Activated T-helper 1 cell treated with anti-CD3 and anti-CD28 coated beads, Interleukin-12 subunit alpha, Interleukin-12 subunit beta, Interleukin-2, Interleukin-4 antibody, amounts not matched to agents 30 ng/mL and 10 ng/mL and 1 ng/mL, durations not matched to agents 14 hours and 24 hours and 36 hours (primary cell): ENCODE measurements at regions of chr12 and their contacts with region 1.

Region 1: GRCh38 chr12:12582895-12583303 is 20.2 kb upstream of the DUSP16 start:
- DNase-seq: peak; percentile 30
- H3K4me3 Mint-ChIP-seq: peak overlapping the region; percentile 21
- H3K27ac Mint-ChIP-seq: peak overlapping the region; percentile 88
- H3K4me1 Mint-ChIP-seq: peaks cover 45% of the 10 kb centered on the region
- H3K27me3 Mint-ChIP-seq: no peaks in the 10 kb centered on the region

Region 2: GRCh38 chr12:12384571-12385340 is 198.1 kb before region 1 on chr12:
- intact Hi-C with region 1: loop called (anchors 1 kb)
- DNase-seq: peak; percentile 55
- H3K4me3 Mint-ChIP-seq: peak overlapping the region; percentile 34
- H3K27ac Mint-ChIP-seq: peak overlapping the region; percentile 91
- H3K4me1 Mint-ChIP-seq: peaks cover 51% of the 10 kb centered on the region
- H3K27me3 Mint-ChIP-seq: no peaks in the 10 kb centered on the region

Region 3: GRCh38 chr12:12505544-12506495 is 77.1 kb before region 1 on chr12:
- intact Hi-C with region 1: loop called (anchors 1 kb)
- DNase-seq: peak; percentile 17
- H3K4me3 Mint-ChIP-seq: peak overlapping the region; percentile 63
- H3K27ac Mint-ChIP-seq: peak overlapping the region; percentile 93
- H3K4me1 Mint-ChIP-seq: peaks cover 53% of the 10 kb centered on the region
- H3K27me3 Mint-ChIP-seq: no peaks in the 10 kb centered on the region

Region 4: DNA sequence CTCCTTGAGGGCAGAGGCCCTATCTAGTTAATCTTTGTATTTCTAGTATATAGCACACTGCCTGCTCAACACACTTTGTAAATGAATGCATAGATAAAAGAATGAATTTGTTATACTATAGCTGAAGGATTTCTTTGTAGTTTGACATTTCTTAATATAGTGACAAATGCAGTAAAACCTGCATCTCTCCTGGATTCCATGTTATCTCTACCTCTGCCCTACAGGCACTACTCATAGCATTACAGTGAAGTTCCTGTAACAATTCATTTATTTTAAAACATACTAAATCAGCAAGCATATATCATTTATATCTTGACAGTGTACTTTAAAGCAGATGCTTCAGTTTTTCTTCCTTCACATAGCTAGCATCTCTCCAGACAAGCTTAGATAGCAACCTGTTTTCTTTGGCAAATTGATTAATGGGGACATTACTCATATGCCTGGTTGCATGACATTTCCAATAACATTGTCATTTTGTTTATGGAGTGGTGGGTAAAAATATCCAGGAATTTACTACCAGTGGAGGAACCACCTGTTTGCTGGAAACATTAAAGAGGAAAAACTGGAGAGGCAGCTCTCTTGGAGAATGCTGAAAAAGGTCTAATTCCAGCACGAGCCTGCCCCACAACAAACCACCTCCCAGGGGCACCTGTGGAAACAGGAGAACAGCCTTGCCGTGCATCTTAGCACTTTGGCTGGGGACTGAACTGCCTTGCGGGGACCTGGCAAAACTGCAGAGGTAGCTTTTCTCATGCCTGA is 16.8 kb after region 1 on chr12:
- intact Hi-C with region 1: loop called (anchors 2 kb)
- DNase-seq: no peak
- H3K4me3 Mint-ChIP-seq: no peak overlapping the region
- H3K27ac Mint-ChIP-seq: no peak overlapping the region
- H3K4me1 Mint-ChIP-seq: no peaks in the 10 kb centered on the region
- H3K27me3 Mint-ChIP-seq: peaks cover 9% of the 10 kb centered on the region

Region 5: DNA sequence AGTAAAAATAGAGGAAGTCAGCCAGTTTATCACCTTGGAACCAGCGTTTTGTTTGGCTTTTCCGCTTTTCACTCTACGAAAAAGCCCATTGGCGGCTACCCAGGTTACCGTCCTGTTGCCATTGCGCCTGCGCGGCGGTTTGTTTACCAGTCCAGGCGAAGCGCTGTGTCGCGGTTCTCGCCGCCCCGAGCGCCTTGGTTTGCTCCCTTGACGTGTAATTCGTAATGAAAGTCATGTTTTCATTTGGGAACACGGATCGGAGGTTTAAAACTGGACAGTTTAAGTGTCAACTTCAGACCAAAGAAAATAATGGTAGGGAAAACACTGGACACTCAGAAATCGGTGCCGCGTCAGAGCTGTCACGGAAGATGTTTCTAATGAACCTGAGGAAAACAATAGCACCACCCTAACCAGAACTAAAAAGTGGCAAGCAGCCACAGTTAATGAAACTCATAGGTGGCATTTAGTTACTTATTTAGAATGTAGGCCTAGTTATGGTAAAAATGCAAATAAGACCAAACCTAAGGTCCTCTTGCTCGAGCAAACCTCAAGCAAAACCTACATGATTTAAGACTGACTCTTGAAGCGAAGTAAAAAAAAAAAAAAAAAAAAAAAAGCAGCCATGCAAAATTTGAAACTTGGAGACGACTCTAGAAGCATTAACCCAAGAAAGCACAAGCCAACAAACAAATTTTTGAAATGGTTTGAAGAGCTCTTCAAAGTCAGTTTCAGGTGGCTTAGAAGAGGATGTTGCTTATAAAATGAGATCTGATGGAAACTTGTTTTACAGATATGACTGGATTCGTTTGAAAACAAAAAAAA is 113.9 kb after region 1 on chr12:
- intact Hi-C with region 1: loop called (anchors 1 kb)
- DNase-seq: peak; percentile 91
- H3K4me3 Mint-ChIP-seq: peak overlapping the region; percentile 96
- H3K27ac Mint-ChIP-seq: peak overlapping the region; percentile 89
- H3K4me1 Mint-ChIP-seq: peaks cover 49% of the 10 kb centered on the region
- H3K27me3 Mint-ChIP-seq: no peaks in the 10 kb centered on the region